ENCODE measurements at regions of chr17 and their contacts with region 1.

Region 1: GRCh38 chr17:59165902-59166342 is 10.4 kb downstream of the PRR11 start:
- DNase-seq: peak; percentile 62 to 68
- ATAC-seq: peak; percentile 93 to 94
- H3K4me3 ChIP-seq: no peak overlapping the region
- H3K27ac ChIP-seq: peak overlapping the region; percentile 45 to 65
- H3K4me1 ChIP-seq: peaks cover 9% of the 10 kb centered on the region; the same call in 2 of the 3 replicates
- CTCF ChIP-seq: peak; percentile 62
- EP300 ChIP-seq: no peak
- POLR2A ChIP-seq: no peak
- RAD21 ChIP-seq: peak; percentile 30 to 35; a peak in 4 of 5 replicates

Region 2: GRCh38 chr17:59124665-59125064 is 41.3 kb before region 1 on chr17:
- CTCF ChIA-PET with region 1: no interaction called
- POLR2A ChIA-PET with region 1: no interaction called
- DNase-seq: no peak
- ATAC-seq: no peak
- H3K4me3 ChIP-seq: no peak overlapping the region
- H3K27ac ChIP-seq: no peak overlapping the region
- H3K4me1 ChIP-seq: no peaks in the 10 kb centered on the region
- CTCF ChIP-seq: no peak
- EP300 ChIP-seq: no peak
- POLR2A ChIP-seq: no peak
- RAD21 ChIP-seq: no peak

Region 3: GRCh38 chr17:59155439-59156182 is 10.3 kb before region 1 on chr17 and contains the start of gene PRR11:
- CTCF ChIA-PET with region 1: interaction called, 18 read pairs
- POLR2A ChIA-PET with region 1: no interaction called
- DNase-seq: no peak
- ATAC-seq: peak; percentile 93 to 94
- H3K4me3 ChIP-seq: peak within 1 kb of the TSS; percentile 77
- H3K27ac ChIP-seq: peak within 1 kb of the TSS; percentile 89 to 93
- H3K4me1 ChIP-seq: peaks cover 65% of the 10 kb centered on the region
- CTCF ChIP-seq: no peak
- EP300 ChIP-seq: no peak
- POLR2A ChIP-seq: no peak
- RAD21 ChIP-seq: no peak
- polyA plus RNA-seq, gene PRR11: 54.4 and 66.4 TPM in 2 replicates

Region 4: DNA sequence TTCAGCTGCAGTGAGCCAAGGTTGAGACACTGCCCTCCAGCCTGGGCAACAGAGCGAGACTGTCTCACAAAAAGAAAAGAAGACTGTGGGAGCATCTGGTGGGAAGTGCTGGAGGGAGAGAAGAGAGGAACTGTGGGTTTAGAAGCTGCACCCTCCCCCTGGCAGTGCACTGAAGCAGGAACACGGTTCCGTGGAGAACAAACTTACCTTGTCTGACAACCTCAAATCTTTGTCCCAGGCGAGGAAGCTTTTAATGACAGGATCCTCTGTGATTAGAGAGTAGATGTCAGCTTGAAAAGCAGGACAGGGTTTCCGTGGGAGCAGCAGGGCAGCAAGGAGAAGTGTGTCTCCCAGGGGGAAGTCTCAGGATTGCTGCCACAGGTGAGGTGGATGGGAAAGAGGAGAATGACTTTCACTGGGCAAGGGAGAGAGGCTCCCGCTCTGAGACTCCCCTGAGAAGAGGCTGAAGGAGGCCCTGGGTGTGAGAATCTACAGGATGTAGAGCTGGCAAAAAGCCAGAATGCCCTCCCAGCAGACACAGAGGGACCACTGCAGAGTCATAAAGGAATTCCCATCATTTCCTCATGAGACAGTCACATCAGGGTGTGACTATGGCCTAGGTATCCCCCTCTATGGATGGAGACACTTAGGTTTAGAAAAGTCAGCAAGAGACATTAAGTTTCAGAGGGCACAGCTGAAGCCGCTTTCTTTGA is 12.5 kb after region 1 on chr17:
- CTCF ChIA-PET with region 1: interaction called, 25 read pairs
- POLR2A ChIA-PET with region 1: no interaction called
- DNase-seq: no peak
- ATAC-seq: no peak
- H3K4me3 ChIP-seq: no peak overlapping the region
- H3K27ac ChIP-seq: no peak overlapping the region
- H3K4me1 ChIP-seq: no peaks in the 10 kb centered on the region
- CTCF ChIP-seq: no peak
- EP300 ChIP-seq: no peak
- POLR2A ChIP-seq: no peak
- RAD21 ChIP-seq: no peak

Region 5: DNA sequence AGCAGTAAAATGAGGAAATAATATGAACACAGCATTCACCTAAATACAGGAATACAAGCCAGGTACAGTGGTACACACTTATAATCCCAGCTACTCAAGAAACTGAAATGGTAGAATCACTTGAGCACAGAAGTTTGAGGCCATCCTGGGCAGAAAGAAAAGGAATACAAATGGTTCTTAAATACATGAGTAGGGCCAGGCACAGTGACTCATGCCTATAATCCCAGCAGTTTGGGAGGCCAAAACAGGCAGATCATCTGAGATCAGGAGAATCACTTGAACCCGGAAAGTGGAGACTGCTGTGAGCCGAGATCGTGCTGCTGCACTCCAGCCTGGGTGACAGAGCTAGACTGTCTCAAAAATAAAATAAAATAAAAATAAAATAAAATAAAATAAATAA is 20.9 kb after region 1 on chr17:
- CTCF ChIA-PET with region 1: interaction called, 12 read pairs
- POLR2A ChIA-PET with region 1: no interaction called
- DNase-seq: no peak
- ATAC-seq: no peak
- H3K4me3 ChIP-seq: no peak overlapping the region
- H3K27ac ChIP-seq: no peak overlapping the region
- H3K4me1 ChIP-seq: no peaks in the 10 kb centered on the region
- CTCF ChIP-seq: no peak
- EP300 ChIP-seq: no peak
- POLR2A ChIP-seq: no peak
- RAD21 ChIP-seq: no peak